HEK293 (cell line): ENCODE measurements at regions of chr21 and their contacts with region 1.

Region 1: DNA sequence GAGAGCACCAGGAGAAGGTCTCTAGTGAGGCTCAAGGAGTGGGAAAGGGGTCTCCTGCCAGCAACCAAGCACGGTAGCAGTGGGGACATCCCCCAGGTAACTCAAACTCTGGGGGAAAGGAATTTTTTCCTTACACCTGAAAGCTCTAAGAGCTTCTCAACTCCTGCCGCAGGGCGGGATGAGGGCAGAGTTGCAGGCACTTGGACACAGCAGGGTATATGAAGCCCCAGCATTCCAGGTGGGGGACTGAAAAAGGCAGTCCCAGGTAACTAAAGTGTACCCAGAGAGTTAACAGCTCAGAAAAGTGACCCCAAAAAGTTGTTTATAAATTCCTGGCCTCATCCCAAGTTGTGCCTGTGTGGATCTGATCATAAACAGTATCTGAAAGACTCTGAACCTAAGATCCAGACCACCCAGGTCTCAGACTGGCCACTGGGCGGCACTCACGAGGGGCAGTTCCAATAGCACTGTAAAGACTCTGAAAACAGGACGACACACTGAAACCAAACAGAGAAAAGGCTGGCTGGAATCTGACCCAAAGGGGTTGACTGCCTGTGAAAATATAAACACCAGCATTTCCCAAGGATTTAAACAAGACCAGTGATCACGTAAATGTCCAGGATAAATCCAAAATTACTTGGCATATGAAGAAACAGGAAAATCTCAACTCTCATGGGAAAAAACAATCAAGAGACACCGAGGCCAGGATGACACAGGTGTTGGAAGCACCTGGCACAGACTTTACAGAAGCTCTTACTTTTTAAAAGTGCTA is 47.5 kb downstream of the HSF2BP start:
- H3K4me3 ChIP-seq: no peak overlapping the region
- H3K27ac ChIP-seq: no peak overlapping the region; the same call in 1 of the 2 replicates
- H3K4me1 ChIP-seq: peaks cover 18% of the 10 kb centered on the region
- CTCF ChIP-seq: peak; percentile 59

Region 2: DNA sequence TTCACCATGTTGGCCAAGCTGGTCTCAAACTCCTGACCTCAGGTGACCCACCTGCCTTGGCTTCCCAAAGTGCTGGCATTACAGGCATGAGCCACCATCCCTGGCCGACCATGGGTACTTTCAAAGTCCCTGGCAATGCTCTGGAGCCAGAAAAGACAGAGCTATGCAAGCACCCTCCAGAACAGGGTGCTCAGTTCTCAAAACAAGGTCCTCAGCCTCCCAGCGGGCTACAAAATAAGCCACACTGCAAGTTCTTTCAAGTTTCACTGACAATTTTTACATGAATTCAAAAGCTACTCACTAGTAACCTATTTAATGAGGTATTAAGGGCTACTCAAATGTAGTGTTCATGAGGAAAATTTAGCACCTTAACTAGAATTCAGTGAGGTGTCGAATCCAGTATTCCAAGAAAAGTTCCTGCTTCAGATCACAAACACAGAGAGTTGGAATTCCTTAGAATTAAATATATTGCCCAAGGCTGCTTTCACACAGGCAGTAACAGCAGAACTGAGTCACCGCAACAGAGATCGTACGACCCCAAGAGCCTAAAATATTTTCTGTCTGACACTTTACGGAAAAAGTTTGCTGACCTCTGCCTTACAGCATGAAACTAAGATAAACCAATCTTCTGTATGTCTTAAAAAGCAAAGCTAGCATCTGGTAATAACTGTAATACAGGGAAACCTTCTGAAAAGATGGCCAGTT is 13.2 kb before region 1 on chr21:
- CTCF ChIA-PET with region 1: interaction called, 14 read pairs
- POLR2A ChIA-PET with region 1: interaction called, 4 read pairs
- H3K4me3 ChIP-seq: no peak overlapping the region
- H3K27ac ChIP-seq: no peak overlapping the region
- H3K4me1 ChIP-seq: no peaks in the 10 kb centered on the region
- CTCF ChIP-seq: no peak

Region 3: DNA sequence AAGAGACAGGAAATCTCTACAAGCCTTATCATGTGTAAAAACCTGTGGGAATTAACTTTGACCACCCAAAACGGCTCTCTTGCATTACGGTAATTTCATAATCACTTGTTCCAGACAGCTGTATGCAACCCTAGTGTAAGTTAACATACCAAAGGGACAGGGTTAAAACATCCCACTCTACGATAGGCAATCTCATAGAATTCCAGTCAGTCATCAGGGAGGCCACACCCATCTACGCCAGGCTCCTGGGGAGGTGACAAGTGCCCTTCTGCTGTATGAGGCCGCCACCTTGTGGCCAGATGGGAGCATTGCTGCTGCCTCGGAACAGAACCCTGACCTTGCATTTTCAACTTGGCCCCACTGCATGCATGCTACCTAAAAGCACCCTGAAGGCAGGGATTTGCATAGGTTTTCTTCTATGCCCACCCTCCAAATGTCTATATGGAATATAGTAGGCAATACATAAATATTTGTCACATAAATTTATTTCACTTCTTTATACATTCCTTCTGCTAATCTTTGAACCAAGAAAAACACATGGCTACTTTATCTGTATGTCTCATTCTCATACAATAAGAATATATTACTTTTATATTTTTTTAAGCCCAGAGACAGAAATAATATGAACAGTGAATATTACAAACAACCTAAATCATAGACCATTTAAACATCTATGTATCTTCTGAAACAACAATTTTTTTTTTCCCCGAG is 34.9 kb after region 1 on chr21:
- CTCF ChIA-PET with region 1: interaction called, 15 read pairs
- POLR2A ChIA-PET with region 1: no interaction called
- H3K4me3 ChIP-seq: no peak overlapping the region
- H3K27ac ChIP-seq: no peak overlapping the region
- H3K4me1 ChIP-seq: peaks cover 7% of the 10 kb centered on the region; the same call in 1 of the 2 replicates
- CTCF ChIP-seq: peak; percentile 95